Common myeloid progenitor, CD34-positive (primary cell): ENCODE measurements at regions of chr19 and their contacts with region 1.

Region 1: GRCh38 chr19:55407800-55408532 is 378 bp upstream of the UBE2S start:
- DNase-seq: peak; percentile 100
- H3K4me3 ChIP-seq: peak overlapping the region in 6 of 7 experiments; percentile 68 to 87 (median 80)
- H3K27ac ChIP-seq: peak overlapping the region; percentile 88 to 94
- H3K4me1 ChIP-seq: peaks cover 5 to 24% (median 22%) of the 10 kb centered on the region in 4 experiments
- H3K27me3 ChIP-seq: no peaks in the 10 kb centered on the region

Region 2: GRCh38 chr19:55339048-55339888 is 68.7 kb before region 1 on chr19 and contains the start of gene KMT5C:
- CTCF ChIA-PET with region 1: interaction called, 3 read pairs
- POLR2A ChIA-PET with region 1: interaction called, 15 read pairs
- DNase-seq: peak; percentile 100
- H3K4me3 ChIP-seq: peak within 1 kb of the TSS; percentile 55 to 85 (median 81)
- H3K27ac ChIP-seq: peak within 1 kb of the TSS; percentile 99 to 100
- H3K4me1 ChIP-seq: peaks cover 0 to 27% (median 25%) of the 10 kb centered on the region in 4 experiments
- H3K27me3 ChIP-seq: no peaks in the 10 kb centered on the region

Region 3: GRCh38 chr19:55391702-55392615 is 16.0 kb before region 1 on chr19:
- CTCF ChIA-PET with region 1: interaction called, 7 read pairs
- POLR2A ChIA-PET with region 1: interaction called, 14 read pairs
- DNase-seq: no peak
- H3K4me3 ChIP-seq: no peak overlapping the region
- H3K27ac ChIP-seq: no peak overlapping the region
- H3K4me1 ChIP-seq: peaks cover 0 to 31% (median 21%) of the 10 kb centered on the region in 4 experiments
- H3K27me3 ChIP-seq: no peaks in the 10 kb centered on the region

Region 4: DNA sequence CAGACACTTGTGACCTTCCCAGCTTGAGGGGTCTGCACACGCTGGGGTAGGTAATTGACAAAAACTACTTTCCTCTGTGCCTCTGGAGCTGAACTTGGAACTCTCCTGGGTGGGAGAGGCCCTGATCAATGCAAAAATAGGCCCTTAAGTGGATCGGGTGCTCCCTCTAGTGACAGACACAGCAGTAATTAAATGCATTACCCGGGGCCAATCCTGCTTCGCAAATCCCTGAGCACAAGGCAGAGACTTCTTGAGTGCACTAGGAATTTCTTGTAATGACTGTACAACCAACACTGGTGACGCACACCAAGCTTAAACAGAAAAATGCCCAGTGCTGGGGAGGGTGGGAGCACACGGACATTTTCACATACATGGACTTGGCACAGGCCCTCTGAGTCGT is 10.2 kb after region 1 on chr19:
- CTCF ChIA-PET with region 1: interaction called, 11 read pairs
- POLR2A ChIA-PET with region 1: interaction called, 4 read pairs
- DNase-seq: peak; percentile 78 to 86 (median 82)
- H3K4me3 ChIP-seq: no peak overlapping the region
- H3K27ac ChIP-seq: no peak overlapping the region
- H3K4me1 ChIP-seq: peaks cover 6 to 40% (median 31%) of the 10 kb centered on the region in 4 experiments
- H3K27me3 ChIP-seq: no peaks in the 10 kb centered on the region